ENCODE measurements at regions of chr13 and their contacts with region 1.

Region 1: GRCh38 chr13:49936085-49936940 is at the start of gene SPRYD7:
- DNase-seq: peak; percentile 99
- H3K4me3 Mint-ChIP-seq: peak within 1 kb of the TSS; percentile 94
- H3K27ac Mint-ChIP-seq: peak within 1 kb of the TSS; percentile 83
- H3K4me1 Mint-ChIP-seq: peaks cover 13% of the 10 kb centered on the region
- H3K27me3 Mint-ChIP-seq: peaks cover 17% of the 10 kb centered on the region
- total RNA-seq, gene SPRYD7: 6.9 and 8.1 TPM in 2 replicates

Region 2: DNA sequence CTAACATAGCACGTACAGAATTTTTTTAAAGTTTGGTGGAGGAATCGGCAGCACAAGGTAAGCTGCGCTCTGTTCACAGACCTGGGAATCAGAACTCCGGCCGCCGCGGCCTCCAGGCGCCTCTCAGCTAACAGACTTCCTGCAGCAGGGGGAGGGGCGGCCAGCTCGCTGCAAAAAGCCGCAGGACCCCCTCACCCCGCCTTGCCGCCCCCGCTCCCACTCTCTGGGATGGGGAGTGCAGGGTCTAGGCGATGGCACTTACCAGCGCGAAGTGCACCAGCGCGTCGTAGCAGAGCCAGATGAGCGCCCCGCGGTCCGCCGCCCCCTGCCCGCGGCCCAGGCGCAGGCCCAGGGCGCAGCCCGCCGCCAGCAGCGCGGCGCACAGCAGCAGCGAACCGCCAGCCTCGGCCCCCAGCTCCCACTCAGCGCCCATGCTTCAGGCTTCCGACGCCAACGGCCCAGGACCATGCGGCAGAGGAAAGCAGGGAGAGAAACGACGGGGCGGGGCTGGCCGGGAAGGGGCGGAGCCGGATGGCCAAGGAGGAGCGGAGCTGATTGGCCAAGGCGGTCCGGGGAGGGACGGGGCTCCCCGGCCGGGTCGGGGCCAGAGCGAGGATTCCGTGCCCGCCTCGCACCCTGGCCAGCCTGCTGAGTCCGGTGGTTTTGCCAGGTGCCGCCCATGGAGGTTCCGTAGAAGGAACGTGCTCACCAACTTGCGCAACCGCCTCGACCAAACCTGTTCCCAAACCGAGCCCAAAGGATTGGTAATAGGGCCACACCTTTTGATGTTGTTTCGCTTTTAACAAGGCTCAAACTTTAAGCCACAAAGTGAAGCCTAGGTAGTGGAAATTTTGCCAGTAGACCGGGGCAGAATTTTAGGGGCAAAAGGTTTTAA is 245.1 kb before region 1 on chr13 and contains the start of gene EBPL:
- intact Hi-C with region 1: loop called (anchors 5 kb)
- DNase-seq: peak; percentile 96
- H3K4me3 Mint-ChIP-seq: peak within 1 kb of the TSS; percentile 93
- H3K27ac Mint-ChIP-seq: peak within 1 kb of the TSS; percentile 81
- H3K4me1 Mint-ChIP-seq: peaks cover 24% of the 10 kb centered on the region
- H3K27me3 Mint-ChIP-seq: no peaks in the 10 kb centered on the region
- total RNA-seq, gene EBPL: 49.0 and 52.3 TPM in 2 replicates